ENCODE measurements at regions of chr18 and their contacts with region 1.

Region 1: DNA sequence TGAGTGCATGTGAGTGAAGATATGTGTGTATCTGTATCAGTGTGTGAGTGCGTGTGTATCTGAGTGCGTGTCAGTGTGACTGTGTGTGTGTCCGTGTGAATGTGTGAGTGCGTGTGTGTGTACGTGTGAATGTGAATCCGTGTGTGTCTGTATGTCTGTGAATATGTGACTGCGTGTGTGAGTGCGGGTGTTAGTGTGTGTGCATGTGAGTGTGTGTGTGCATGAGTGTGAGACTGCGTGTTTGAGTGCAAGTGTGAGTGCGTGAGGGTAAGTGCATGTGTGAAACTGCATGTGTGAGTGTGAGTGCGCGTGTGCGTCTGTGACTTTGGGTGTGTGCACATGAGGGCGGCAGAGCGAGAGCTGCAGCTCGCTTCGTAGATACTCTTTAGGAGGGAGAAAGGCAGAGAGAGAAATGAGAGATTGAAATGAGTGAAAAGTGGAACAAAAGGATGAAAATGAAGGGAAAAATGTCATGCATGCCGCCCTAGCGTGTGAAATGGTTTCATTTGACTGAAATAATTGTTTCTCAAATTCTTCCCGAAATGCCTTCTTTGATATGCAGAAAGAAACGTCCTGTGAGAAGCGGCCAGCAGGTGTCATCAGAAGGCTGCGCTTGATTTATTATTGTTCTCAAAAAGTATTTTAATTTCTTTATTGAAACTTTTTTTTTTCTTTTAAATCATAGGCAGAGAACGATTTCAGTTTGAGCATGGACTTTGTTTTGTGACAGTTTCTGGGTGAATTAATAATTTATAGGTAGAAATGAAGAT is 25.6 kb downstream of the ZNF407 start:
- DNase-seq: peak in 12 of 14 experiments; percentile 19 to 65 (median 38)
- ATAC-seq: peak; percentile 39
- H3K4me3 ChIP-seq: no peak overlapping the region
- H3K4me3 Mint-ChIP-seq: no peak overlapping the region
- H3K27ac ChIP-seq: no peak overlapping the region
- H3K27ac Mint-ChIP-seq: no peak overlapping the region
- H3K4me1 ChIP-seq: peaks cover 17% of the 10 kb centered on the region
- H3K4me1 Mint-ChIP-seq: peaks cover 20% of the 10 kb centered on the region
- H3K27me3 ChIP-seq: no peaks in the 10 kb centered on the region
- H3K27me3 Mint-ChIP-seq: no peaks in the 10 kb centered on the region
- CTCF ChIP-seq: peak; percentile 79

Region 2: GRCh38 chr18:74512321-74513053 is 110.7 kb before region 1 on chr18:
- CTCF ChIA-PET with region 1: no interaction called
- POLR2A ChIA-PET with region 1: no interaction called
- intact Hi-C with region 1: no loop called
- DNase-seq: no peak
- ATAC-seq: no peak
- H3K4me3 ChIP-seq: no peak overlapping the region
- H3K4me3 Mint-ChIP-seq: no peak overlapping the region
- H3K27ac ChIP-seq: no peak overlapping the region
- H3K27ac Mint-ChIP-seq: no peak overlapping the region
- H3K4me1 ChIP-seq: no peaks in the 10 kb centered on the region
- H3K4me1 Mint-ChIP-seq: no peaks in the 10 kb centered on the region
- H3K27me3 ChIP-seq: no peaks in the 10 kb centered on the region
- H3K27me3 Mint-ChIP-seq: no peaks in the 10 kb centered on the region
- CTCF ChIP-seq: no peak

Region 3: DNA sequence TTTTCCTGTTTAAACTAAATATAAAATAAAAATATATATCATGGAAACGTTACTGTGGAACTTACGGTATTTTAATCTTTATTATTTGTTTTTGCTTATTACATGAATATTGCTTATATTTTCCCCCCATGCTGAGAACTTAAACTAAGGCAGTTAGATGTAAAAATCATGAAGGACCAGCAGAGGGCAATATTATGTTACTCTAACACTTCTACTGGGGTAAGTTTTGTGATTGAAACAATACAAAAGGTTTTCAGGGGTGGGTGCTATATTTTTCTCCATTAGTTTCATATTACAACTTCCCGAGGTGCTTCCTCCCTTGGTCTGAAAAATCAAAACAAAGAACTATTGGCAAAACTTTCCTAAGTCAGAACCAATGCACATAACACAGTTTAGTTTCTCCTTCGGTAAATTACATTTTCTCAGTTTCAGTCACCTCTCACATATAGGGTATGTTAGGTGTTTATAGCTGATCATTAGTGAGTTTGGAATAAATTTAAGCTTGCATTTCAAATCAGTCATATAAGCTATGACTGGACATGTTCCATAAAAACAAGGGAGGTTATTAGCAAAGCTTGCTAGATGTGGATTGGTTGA is 29.3 kb after region 1 on chr18:
- CTCF ChIA-PET with region 1: no interaction called
- POLR2A ChIA-PET with region 1: no interaction called
- intact Hi-C with region 1: loop called in 1 of 2 experiments (anchors 1 kb)
- DNase-seq: peak in 3 of 14 experiments; percentile 48 to 57 (median 57)
- ATAC-seq: peak; percentile 49
- H3K4me3 ChIP-seq: no peak overlapping the region
- H3K4me3 Mint-ChIP-seq: no peak overlapping the region
- H3K27ac ChIP-seq: no peak overlapping the region
- H3K27ac Mint-ChIP-seq: no peak overlapping the region
- H3K4me1 ChIP-seq: no peaks in the 10 kb centered on the region
- H3K4me1 Mint-ChIP-seq: peaks cover 9% of the 10 kb centered on the region
- H3K27me3 ChIP-seq: no peaks in the 10 kb centered on the region
- H3K27me3 Mint-ChIP-seq: no peaks in the 10 kb centered on the region
- CTCF ChIP-seq: peak; percentile 73

Region 4: GRCh38 chr18:74722237-74722636 is 99.0 kb after region 1 on chr18:
- CTCF ChIA-PET with region 1: no interaction called
- POLR2A ChIA-PET with region 1: no interaction called
- intact Hi-C with region 1: no loop called
- DNase-seq: no peak
- ATAC-seq: no peak
- H3K4me3 ChIP-seq: no peak overlapping the region
- H3K4me3 Mint-ChIP-seq: no peak overlapping the region
- H3K27ac ChIP-seq: no peak overlapping the region
- H3K27ac Mint-ChIP-seq: no peak overlapping the region
- H3K4me1 ChIP-seq: no peaks in the 10 kb centered on the region
- H3K4me1 Mint-ChIP-seq: peaks cover 31% of the 10 kb centered on the region
- H3K27me3 ChIP-seq: no peaks in the 10 kb centered on the region
- H3K27me3 Mint-ChIP-seq: no peaks in the 10 kb centered on the region
- CTCF ChIP-seq: no peak

Region 5: DNA sequence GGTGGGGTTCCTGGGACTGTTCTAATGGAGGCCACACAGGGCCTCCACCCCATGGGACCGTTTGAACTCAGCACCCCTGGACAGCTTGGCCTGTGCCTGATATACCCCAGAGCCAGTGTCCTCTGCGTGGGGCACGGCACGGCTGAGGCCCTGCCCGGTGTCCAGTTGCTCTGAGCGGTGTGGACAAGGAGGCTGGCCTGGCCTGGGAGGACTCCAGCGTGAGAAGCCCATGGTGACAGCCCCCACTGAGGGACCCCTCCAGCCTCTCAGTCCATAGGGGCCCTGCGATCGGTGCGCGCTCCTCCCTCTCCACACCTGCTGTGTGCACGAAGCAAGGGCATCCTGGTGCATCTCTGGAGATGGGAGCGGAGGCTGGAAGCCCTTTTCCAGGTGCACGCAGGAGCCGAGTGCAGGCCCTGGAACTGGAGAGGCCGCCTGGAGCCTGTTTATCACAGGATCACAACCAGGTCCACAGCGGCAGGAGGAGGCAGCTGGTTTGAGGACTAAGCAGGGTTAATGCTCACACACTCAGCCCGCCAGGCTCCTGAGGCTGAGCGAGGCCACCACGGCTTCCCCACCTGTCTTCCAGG is 465.5 kb after region 1 on chr18:
- CTCF ChIA-PET with region 1: no interaction called
- POLR2A ChIA-PET with region 1: no interaction called
- intact Hi-C with region 1: loop called in 1 of 2 experiments (anchors 10 kb)
- DNase-seq: no peak
- ATAC-seq: no peak
- H3K4me3 ChIP-seq: no peak overlapping the region
- H3K4me3 Mint-ChIP-seq: no peak overlapping the region
- H3K27ac ChIP-seq: no peak overlapping the region
- H3K27ac Mint-ChIP-seq: no peak overlapping the region
- H3K4me1 ChIP-seq: no peaks in the 10 kb centered on the region
- H3K4me1 Mint-ChIP-seq: no peaks in the 10 kb centered on the region
- H3K27me3 ChIP-seq: no peaks in the 10 kb centered on the region
- H3K27me3 Mint-ChIP-seq: no peaks in the 10 kb centered on the region
- CTCF ChIP-seq: no peak

Region 6: DNA sequence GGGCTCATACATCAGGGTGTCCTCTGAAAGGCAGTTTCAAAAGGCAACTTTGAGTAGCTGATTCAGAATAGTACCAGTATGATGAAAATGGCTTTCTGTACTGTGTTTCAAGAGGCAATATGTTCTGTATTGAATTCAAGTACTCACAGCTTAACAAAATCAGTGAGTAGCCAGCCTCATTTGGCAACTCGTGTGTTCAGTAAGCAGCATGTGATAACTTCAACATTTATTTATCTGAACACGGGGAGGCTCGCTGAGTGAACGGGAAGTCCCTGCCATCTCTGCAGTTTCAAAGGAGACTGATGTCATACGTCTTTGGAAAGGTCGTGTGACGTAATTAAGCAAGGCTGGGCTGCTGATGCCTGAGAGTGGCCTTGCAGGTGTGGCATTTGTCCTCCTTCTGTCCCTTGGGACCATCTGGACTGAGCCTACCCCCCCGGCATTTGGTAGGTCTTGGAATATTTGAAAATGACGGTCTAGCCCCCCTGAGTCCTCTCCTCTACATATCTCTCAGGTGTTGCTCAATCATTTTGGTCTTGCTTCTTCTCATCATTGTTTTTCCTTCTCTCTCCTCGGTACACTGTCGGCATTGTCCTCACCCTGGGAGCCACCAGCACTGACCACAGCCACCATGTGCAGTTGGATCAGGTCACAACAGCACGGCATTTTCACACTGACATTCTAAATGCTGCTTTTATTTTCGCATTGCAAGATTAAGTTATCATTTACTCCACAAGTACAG is 741.5 kb after region 1 on chr18:
- CTCF ChIA-PET with region 1: no interaction called
- POLR2A ChIA-PET with region 1: no interaction called
- intact Hi-C with region 1: loop called in 1 of 2 experiments (anchors 10 kb)
- DNase-seq: peak in 2 of 14 experiments; percentile 6 to 17
- ATAC-seq: no peak
- H3K4me3 ChIP-seq: no peak overlapping the region
- H3K4me3 Mint-ChIP-seq: no peak overlapping the region
- H3K27ac ChIP-seq: no peak overlapping the region
- H3K27ac Mint-ChIP-seq: no peak overlapping the region
- H3K4me1 ChIP-seq: no peaks in the 10 kb centered on the region
- H3K4me1 Mint-ChIP-seq: no peaks in the 10 kb centered on the region
- H3K27me3 ChIP-seq: peaks cover 0 to 2% of the 10 kb centered on the region in 2 experiments
- H3K27me3 Mint-ChIP-seq: peaks cover 2% of the 10 kb centered on the region
- CTCF ChIP-seq: no peak

Region 7: GRCh38 chr18:76349067-76349715 is 1726.0 kb after region 1 on chr18:
- CTCF ChIA-PET with region 1: no interaction called
- POLR2A ChIA-PET with region 1: no interaction called
- intact Hi-C with region 1: loop called (anchors 1 to 5 kb)
- DNase-seq: peak; percentile 42 to 76 (median 46)
- ATAC-seq: peak; percentile 52
- H3K4me3 ChIP-seq: no peak overlapping the region
- H3K4me3 Mint-ChIP-seq: no peak overlapping the region
- H3K27ac ChIP-seq: no peak overlapping the region
- H3K27ac Mint-ChIP-seq: no peak overlapping the region
- H3K4me1 ChIP-seq: peaks cover 3% of the 10 kb centered on the region
- H3K4me1 Mint-ChIP-seq: peaks cover 7% of the 10 kb centered on the region
- H3K27me3 ChIP-seq: no peaks in the 10 kb centered on the region
- H3K27me3 Mint-ChIP-seq: no peaks in the 10 kb centered on the region
- CTCF ChIP-seq: peak; percentile 92

Measured in CD4-positive, alpha-beta T cell (primary cell).